Natural killer cell (primary cell): ENCODE measurements at regions of chr6 and their contacts with region 1.

Region 1: DNA sequence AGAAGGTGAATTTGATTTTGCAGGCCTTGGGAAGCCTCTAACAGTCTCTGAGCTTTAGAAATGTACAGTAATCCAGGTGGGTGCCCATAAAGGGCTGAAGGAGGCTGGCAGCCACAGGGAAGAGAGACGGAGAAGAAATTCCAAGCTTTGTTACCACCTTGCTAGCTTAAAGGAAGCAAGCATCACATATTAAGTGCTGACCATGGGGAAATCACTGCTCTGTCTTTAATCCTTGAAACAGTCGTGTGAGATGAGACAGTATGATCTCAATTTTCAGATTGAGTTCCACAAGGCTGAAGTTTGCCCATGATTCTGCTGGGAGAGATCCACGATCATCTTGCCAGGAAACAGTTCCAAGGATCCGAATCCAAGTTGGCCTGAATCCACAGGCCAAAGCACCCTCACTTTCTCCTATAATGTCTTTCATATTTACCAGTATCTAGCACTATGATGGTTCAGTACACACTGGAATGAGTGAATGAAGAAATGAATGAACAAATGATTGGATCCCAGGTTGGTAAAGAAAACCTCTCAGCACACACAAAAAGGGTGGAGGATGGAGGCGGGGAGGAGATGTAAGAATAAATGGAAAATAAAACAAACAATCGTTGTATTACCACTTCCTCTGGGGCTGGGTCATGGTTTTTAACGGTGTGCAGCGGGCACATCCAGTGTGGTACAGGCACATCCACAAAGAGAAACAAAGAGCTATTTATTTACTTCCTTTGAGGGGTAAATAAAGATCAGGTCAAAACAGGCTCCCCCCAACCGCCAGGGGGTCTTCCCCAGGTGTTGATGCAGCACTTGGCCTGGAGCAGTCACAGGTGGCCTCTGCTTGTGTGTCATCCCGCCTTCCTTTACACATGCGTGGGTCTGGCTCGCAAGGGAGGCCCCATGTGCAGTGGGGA is 28.2 kb upstream of the TAF8 start:
- DNase-seq: peak in 1 of 2 donors; percentile 81
- ATAC-seq: peak; percentile 58 to 74 (median 73)
- H3K4me3 ChIP-seq: no peak overlapping the region
- H3K4me3 Mint-ChIP-seq: peak overlapping the region; percentile 89
- H3K27ac ChIP-seq: peak overlapping the region; percentile 76
- H3K27ac Mint-ChIP-seq: peak overlapping the region; percentile 95 to 98
- H3K4me1 ChIP-seq: peaks cover 80% of the 10 kb centered on the region
- H3K4me1 Mint-ChIP-seq: peaks cover 69 to 74% of the 10 kb centered on the region in 2 donors
- H3K27me3 ChIP-seq: no peaks in the 10 kb centered on the region
- H3K27me3 Mint-ChIP-seq: no peaks in the 10 kb centered on the region
- CTCF ChIP-seq: no peak

Region 2: GRCh38 chr6:40900791-40901190 is 1121.3 kb before region 1 on chr6:
- intact Hi-C with region 1: no loop called
- DNase-seq: no peak
- ATAC-seq: no peak
- H3K4me3 ChIP-seq: no peak overlapping the region
- H3K4me3 Mint-ChIP-seq: no peak overlapping the region
- H3K27ac ChIP-seq: no peak overlapping the region
- H3K27ac Mint-ChIP-seq: no peak overlapping the region
- H3K4me1 ChIP-seq: no peaks in the 10 kb centered on the region
- H3K4me1 Mint-ChIP-seq: no peaks in the 10 kb centered on the region
- H3K27me3 ChIP-seq: no peaks in the 10 kb centered on the region
- H3K27me3 Mint-ChIP-seq: peaks cover 8 to 18% of the 10 kb centered on the region in 2 donors
- CTCF ChIP-seq: no peak

Region 3: DNA sequence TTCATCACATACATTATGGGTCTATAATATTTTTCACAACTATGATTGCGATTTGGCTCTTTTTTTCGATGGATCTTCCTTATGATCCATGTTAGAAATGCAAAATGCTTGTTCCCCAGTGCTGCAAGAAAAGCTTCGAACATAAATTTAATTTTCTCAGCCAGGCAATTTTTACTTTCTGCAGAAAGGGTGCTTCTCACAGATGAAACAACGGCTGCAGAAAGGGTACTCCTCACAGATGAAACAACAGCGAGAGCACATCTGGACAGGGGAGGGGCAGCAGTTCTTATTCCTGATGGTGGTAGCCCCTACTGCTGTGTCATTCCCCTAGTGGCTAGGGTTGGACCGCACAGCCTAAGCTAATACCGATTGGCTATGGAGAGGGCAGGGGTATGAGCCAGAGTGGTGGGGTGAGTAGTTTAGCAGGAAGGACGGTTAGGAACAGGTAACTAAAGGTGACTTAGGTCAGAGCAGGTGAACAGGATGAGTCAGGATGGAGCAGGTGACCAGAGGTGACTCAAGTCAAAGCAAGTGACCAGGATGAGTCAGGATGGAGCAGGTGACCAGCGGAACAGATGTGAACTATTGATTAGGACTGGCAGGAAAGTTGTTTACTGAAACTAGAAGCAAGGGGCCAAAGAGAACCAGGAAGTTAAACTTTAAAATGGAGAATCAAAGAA is 807.4 kb before region 1 on chr6:
- intact Hi-C with region 1: no loop called
- DNase-seq: no peak
- ATAC-seq: no peak
- H3K4me3 ChIP-seq: no peak overlapping the region
- H3K4me3 Mint-ChIP-seq: no peak overlapping the region
- H3K27ac ChIP-seq: no peak overlapping the region
- H3K27ac Mint-ChIP-seq: no peak overlapping the region
- H3K4me1 ChIP-seq: peaks cover 4% of the 10 kb centered on the region
- H3K4me1 Mint-ChIP-seq: no peaks in the 10 kb centered on the region
- H3K27me3 ChIP-seq: peaks cover 3% of the 10 kb centered on the region
- H3K27me3 Mint-ChIP-seq: peaks cover 6 to 10% of the 10 kb centered on the region in 2 donors
- CTCF ChIP-seq: no peak

Region 4: DNA sequence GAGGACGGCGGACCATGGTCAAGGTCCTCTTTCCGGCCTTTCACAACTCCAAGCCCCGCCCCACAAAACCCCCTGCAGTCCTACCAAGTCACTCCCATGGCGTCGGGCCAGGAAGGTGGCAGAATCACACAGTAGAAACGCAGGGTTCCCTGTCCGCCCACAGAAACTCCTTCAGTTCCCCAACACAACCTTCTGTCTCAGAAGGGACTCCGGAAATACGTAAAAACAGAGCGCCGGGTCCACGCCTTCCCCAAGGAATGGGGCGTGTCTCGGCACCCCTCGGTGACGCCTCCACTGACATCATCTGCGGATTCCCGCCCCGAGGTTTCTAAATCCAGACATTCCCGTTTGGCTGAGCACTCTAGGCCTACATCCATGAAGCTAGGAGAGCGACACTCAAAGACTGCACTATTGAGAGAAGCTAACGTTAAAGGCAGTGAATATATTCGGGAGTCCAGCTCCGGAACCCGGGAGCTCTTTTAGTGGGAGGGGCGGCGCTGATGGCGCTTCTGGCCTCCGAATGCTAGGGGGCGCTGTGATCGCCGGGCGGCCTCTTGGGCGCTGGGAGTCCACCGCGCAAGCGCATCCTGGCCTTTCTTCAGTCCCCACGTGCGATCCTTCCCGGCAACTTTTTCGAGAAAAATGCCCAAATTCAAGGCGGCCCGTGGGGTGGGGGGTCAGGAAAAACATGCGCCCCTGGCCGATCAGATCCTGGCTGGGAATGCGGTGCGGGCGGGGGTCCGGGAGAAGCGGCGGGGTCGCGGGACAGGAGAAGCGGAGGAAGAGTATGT is 101.0 kb before region 1 on chr6 and contains the starts of genes BYSL and MED20:
- intact Hi-C with region 1: no loop called
- DNase-seq: peak; percentile 96 to 97
- ATAC-seq: peak; percentile 90 to 95 (median 92)
- H3K4me3 ChIP-seq: peak within 1 kb of the TSS; percentile 94
- H3K4me3 Mint-ChIP-seq: peak within 1 kb of the TSS; percentile 96
- H3K27ac ChIP-seq: peak within 1 kb of the TSS; percentile 96
- H3K27ac Mint-ChIP-seq: peak within 1 kb of the TSS; percentile 98
- H3K4me1 ChIP-seq: peaks cover 33% of the 10 kb centered on the region
- H3K4me1 Mint-ChIP-seq: peaks cover 57 to 60% of the 10 kb centered on the region in 2 donors
- H3K27me3 ChIP-seq: no peaks in the 10 kb centered on the region
- H3K27me3 Mint-ChIP-seq: no peaks in the 10 kb centered on the region
- CTCF ChIP-seq: peak; percentile 91
- total RNA-seq, gene BYSL: 5.4 to 11.6 (median 5.7) TPM
- total RNA-seq, gene MED20: 6.4 to 15.2 (median 15.0) TPM

Region 5: GRCh38 chr6:41970436-41970846 is 51.7 kb before region 1 on chr6:
- intact Hi-C with region 1: loop called (anchors 5 kb)
- DNase-seq: peak; percentile 28 to 31
- ATAC-seq: peak; percentile 76 to 85 (median 84)
- H3K4me3 ChIP-seq: no peak overlapping the region
- H3K4me3 Mint-ChIP-seq: peak overlapping the region; percentile 67
- H3K27ac ChIP-seq: peak overlapping the region; percentile 48
- H3K27ac Mint-ChIP-seq: peak overlapping the region; percentile 71 to 89
- H3K4me1 ChIP-seq: peaks cover 64% of the 10 kb centered on the region
- H3K4me1 Mint-ChIP-seq: peaks cover 75 to 82% of the 10 kb centered on the region in 2 donors
- H3K27me3 ChIP-seq: no peaks in the 10 kb centered on the region
- H3K27me3 Mint-ChIP-seq: no peaks in the 10 kb centered on the region
- CTCF ChIP-seq: no peak

Region 6: GRCh38 chr6:42009966-42010891 is 11.9 kb before region 1 on chr6:
- intact Hi-C with region 1: loop called (anchors 2 kb)
- DNase-seq: peak in 1 of 2 donors; percentile 43
- ATAC-seq: peak in 2 of 3 donors; percentile 39 to 53
- H3K4me3 ChIP-seq: no peak overlapping the region
- H3K4me3 Mint-ChIP-seq: peak overlapping the region; percentile 47
- H3K27ac ChIP-seq: peak overlapping the region; percentile 32
- H3K27ac Mint-ChIP-seq: peak overlapping the region; percentile 89 to 91
- H3K4me1 ChIP-seq: peaks cover 68% of the 10 kb centered on the region
- H3K4me1 Mint-ChIP-seq: peaks cover 62 to 80% of the 10 kb centered on the region in 2 donors
- H3K27me3 ChIP-seq: no peaks in the 10 kb centered on the region
- H3K27me3 Mint-ChIP-seq: no peaks in the 10 kb centered on the region
- CTCF ChIP-seq: no peak

Region 7: DNA sequence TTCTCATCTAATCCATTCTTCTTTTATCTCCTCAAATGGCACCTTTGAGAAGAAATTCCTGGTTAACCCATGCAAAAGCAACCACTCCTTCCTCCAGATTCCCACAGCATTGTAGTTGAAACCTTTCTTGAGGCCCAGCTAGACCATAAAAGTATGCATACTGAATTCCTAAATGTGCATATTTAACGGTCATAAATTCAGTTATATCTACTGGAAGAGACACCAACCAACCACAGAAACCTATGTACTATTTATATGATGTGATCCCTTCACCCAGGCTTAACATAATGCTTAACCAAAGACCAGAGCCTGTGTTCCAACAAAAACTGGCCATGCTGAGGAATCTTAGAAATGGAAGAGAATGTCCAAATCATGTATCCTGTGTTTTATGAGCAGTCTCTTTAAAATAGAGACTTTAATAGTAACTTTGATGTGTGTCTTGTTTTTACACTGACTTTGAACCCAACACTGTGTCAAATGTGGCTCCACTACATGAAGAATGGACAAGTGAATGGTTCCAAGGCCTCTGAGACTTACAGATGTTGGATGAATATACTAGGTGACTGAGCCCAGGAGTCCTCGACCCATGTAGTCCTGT is 16.8 kb after region 1 on chr6:
- intact Hi-C with region 1: loop called (anchors 1 kb)
- DNase-seq: peak in 1 of 2 donors; percentile 6
- ATAC-seq: no peak
- H3K4me3 ChIP-seq: peak overlapping the region; percentile 8
- H3K4me3 Mint-ChIP-seq: peak overlapping the region; percentile 91
- H3K27ac ChIP-seq: peak overlapping the region; percentile 53
- H3K27ac Mint-ChIP-seq: peak overlapping the region; percentile 87 to 97
- H3K4me1 ChIP-seq: peaks cover 90% of the 10 kb centered on the region
- H3K4me1 Mint-ChIP-seq: peaks cover 56 to 61% of the 10 kb centered on the region in 2 donors
- H3K27me3 ChIP-seq: no peaks in the 10 kb centered on the region
- H3K27me3 Mint-ChIP-seq: no peaks in the 10 kb centered on the region
- CTCF ChIP-seq: no peak